Dendritic cell treated with granulocyte-macrophage colony-stimulating factor and Interleukin-4, amounts not matched to agents 40 ng/mL and 50 ng/mL, for 4 days (primary cell): ENCODE measurements at regions of chr20 and their contacts with region 1.

Region 1: DNA sequence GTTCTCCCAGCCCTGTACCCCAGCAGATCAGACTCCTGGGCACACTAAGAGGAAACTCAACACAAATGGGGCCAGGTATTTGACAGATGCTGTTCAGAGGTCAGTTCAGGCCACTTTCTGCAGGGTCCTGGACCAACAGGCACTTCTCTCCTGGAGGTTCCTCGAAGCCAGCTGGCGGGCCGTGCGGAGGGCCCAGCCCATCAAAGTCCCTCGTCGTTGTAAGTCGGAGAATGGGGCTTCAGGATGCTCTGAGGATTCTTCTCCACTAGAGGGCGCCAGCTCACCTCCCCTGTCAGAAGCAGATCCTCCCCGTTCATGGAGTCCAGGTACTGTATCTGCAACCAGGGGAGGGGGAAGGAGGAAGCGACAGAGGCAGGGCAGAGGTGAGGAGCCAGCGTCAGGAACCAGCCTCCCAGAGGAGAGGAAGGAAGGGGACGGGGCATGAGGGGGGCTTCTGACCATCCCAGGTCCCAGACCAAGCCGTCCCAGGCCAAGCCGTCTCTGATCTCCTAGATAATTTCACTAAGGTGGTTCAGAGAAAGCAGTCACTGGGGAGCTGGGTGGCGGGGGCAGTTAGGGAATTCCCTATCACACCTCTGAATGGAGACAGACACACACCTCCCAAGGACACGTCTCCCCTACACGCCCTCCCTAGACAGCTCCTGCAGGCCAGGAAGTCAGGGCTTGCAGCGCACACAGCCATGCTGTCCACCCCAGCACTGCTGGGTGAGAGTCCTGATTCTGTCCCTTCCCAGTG is 11.7 kb upstream of the FAM83C start:
- H3K4me3 Mint-ChIP-seq: no peak overlapping the region
- H3K27ac Mint-ChIP-seq: no peak overlapping the region
- H3K4me1 Mint-ChIP-seq: peaks cover 35% of the 10 kb centered on the region
- H3K27me3 Mint-ChIP-seq: no peaks in the 10 kb centered on the region

Region 2: GRCh38 chr20:35329435-35330139 is 25.7 kb after region 1 on chr20:
- intact Hi-C with region 1: loop called (anchors 1 kb)
- H3K4me3 Mint-ChIP-seq: no peak overlapping the region
- H3K27ac Mint-ChIP-seq: peak overlapping the region; percentile 54
- H3K4me1 Mint-ChIP-seq: peaks cover 35% of the 10 kb centered on the region
- H3K27me3 Mint-ChIP-seq: no peaks in the 10 kb centered on the region

Region 3: DNA sequence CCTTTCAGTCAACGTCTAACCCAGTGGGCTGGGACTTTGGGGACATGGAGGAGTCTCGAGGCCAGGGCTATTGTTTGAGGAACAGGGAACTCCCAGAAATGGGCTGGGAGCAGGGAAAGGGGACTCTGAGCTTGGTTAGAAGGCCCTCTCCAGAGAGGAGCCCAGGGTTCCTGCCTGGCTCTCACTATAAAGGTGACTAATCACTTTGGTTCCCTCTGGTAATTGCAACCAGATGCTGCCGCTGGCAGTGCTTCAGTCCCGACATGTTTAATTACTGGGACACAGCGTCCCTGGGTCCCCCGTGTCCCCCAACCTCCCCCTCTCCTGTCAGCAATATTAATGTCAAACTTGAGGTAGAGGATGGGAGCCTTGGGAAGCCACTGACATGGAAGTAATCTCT is 139.1 kb after region 1 on chr20:
- intact Hi-C with region 1: loop called (anchors 1 kb)
- H3K4me3 Mint-ChIP-seq: no peak overlapping the region
- H3K27ac Mint-ChIP-seq: no peak overlapping the region
- H3K4me1 Mint-ChIP-seq: peaks cover 6% of the 10 kb centered on the region
- H3K27me3 Mint-ChIP-seq: peaks cover 24% of the 10 kb centered on the region